ENCODE measurements at regions of chrX and their contacts with region 1.

Region 1: DNA sequence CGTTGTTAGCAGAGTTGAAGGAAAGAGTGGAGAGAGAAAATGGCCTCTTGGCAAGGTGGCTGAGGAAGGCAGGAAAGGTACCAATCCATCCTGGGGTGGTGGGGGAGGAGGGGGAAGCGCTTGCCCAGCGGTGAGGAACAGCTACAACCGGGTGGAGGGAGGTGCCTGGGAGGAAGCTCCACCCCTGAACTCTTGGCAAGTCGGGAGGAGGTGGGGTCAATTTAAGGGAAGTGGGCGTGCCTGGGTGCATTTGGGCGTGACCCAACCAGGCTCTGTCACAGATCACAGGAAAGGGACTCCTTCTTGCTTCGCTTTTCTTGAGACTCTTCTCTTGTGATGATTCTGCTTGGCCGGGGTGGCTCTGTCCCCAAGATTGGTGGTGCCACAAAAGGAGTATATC is 41.7 kb downstream of the BCORL1 start:
- DNase-seq: peak; percentile 69 to 88 (median 78)
- H3K4me3 ChIP-seq: no peak overlapping the region
- H3K4me3 Mint-ChIP-seq: peak overlapping the region in 6 of 7 donors; percentile 25 to 75 (median 58)
- H3K27ac ChIP-seq: peak overlapping the region; percentile 9
- H3K27ac Mint-ChIP-seq: peak overlapping the region; percentile 54 to 89 (median 78)
- H3K4me1 ChIP-seq: peaks cover 7% of the 10 kb centered on the region
- H3K4me1 Mint-ChIP-seq: peaks cover 13 to 14% (median 13%) of the 10 kb centered on the region in 3 donors
- H3K27me3 ChIP-seq: no peaks in the 10 kb centered on the region
- H3K27me3 Mint-ChIP-seq: peaks cover 0 to 7% of the 10 kb centered on the region in 2 donors

Region 2: DNA sequence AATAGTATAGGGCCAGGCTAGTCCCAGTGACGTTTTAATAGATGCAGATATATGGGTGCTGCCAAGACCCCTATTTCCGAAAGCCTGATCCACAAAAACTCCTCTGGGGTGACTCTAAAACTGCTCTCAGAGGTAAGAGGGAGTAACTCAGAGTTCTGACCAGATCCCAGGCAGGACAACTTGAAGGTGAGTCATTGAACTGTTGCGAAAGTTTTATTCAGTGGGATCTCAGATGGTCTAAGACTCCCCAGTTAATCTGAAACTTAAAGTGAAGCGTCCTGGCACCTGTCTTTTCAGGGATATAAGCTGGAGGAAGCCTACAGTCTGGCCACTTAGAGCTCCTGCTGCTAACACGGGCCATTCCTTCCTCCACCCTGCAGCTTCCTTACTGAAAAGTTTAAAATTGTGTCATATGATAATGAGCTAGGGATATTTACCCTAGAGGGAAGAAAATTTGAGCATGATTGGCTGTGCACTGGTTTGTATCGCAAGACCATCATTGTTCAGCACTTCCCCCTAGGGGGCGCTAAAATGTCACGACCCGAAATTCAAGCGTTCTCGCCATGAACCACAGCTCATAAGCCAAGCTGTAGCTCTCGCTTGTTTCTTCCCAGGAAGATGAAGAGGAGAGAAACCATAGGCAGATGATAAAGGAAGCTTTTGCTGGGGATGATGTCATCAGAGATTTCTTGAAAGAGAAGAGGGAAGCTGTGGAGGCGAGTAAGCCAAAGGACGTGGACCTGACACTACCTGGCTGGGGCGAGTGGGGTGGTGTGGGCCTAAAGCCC is 98.6 kb before region 1 on chrX:
- CTCF ChIA-PET with region 1: interaction called, 115 read pairs
- POLR2A ChIA-PET with region 1: interaction called, 4 read pairs
- DNase-seq: peak; percentile 51 to 77 (median 55)
- H3K4me3 ChIP-seq: no peak overlapping the region
- H3K4me3 Mint-ChIP-seq: no peak overlapping the region
- H3K27ac ChIP-seq: no peak overlapping the region
- H3K27ac Mint-ChIP-seq: peak overlapping the region in 2 of 8 donors; percentile 27 to 61
- H3K4me1 ChIP-seq: no peaks in the 10 kb centered on the region
- H3K4me1 Mint-ChIP-seq: peaks cover 3 to 6% (median 4%) of the 10 kb centered on the region in 3 donors
- H3K27me3 ChIP-seq: no peaks in the 10 kb centered on the region
- H3K27me3 Mint-ChIP-seq: peaks cover 0 to 3% of the 10 kb centered on the region in 2 donors

Region 3: DNA sequence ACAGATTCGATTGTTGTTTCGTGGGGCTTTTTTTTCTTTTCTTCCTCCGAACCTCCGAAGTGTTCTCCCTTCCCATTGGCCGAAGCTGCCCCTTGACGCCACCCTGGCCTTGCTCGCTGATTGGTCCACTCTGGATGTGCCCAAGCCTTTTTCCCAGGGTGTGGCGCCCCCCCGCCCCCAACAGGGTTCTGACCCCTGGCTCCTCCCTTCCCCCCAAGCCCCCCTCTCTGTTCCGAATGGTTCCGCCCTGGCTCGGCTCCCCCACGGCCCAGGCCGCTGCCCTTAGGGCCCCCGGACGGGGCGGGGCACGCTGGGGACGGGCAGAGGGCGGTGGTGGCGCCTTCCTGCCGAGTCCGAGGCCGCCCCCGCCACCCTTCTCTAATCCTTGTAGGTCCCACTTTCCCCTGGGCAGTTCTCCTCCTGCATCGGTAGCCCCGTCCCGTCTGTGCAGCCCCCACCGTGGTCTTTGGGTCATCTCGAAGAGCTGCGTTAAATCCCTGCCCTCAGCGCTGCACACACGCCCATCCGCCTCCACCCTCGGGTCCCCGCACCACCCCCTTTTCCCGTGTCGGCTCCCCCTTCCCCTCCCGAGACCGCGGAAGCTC is 92.6 kb before region 1 on chrX:
- CTCF ChIA-PET with region 1: interaction called, 115 read pairs
- POLR2A ChIA-PET with region 1: no interaction called
- DNase-seq: peak; percentile 29 to 79 (median 49)
- H3K4me3 ChIP-seq: peak overlapping the region; percentile 49
- H3K4me3 Mint-ChIP-seq: peak overlapping the region; percentile 77 to 92 (median 80)
- H3K27ac ChIP-seq: peak overlapping the region; percentile 51
- H3K27ac Mint-ChIP-seq: peak overlapping the region; percentile 28 to 99 (median 92)
- H3K4me1 ChIP-seq: no peaks in the 10 kb centered on the region
- H3K4me1 Mint-ChIP-seq: peaks cover 0 to 9% (median 0%) of the 10 kb centered on the region in 3 donors
- H3K27me3 ChIP-seq: no peaks in the 10 kb centered on the region
- H3K27me3 Mint-ChIP-seq: peaks cover 0 to 8% of the 10 kb centered on the region in 2 donors

Region 4: DNA sequence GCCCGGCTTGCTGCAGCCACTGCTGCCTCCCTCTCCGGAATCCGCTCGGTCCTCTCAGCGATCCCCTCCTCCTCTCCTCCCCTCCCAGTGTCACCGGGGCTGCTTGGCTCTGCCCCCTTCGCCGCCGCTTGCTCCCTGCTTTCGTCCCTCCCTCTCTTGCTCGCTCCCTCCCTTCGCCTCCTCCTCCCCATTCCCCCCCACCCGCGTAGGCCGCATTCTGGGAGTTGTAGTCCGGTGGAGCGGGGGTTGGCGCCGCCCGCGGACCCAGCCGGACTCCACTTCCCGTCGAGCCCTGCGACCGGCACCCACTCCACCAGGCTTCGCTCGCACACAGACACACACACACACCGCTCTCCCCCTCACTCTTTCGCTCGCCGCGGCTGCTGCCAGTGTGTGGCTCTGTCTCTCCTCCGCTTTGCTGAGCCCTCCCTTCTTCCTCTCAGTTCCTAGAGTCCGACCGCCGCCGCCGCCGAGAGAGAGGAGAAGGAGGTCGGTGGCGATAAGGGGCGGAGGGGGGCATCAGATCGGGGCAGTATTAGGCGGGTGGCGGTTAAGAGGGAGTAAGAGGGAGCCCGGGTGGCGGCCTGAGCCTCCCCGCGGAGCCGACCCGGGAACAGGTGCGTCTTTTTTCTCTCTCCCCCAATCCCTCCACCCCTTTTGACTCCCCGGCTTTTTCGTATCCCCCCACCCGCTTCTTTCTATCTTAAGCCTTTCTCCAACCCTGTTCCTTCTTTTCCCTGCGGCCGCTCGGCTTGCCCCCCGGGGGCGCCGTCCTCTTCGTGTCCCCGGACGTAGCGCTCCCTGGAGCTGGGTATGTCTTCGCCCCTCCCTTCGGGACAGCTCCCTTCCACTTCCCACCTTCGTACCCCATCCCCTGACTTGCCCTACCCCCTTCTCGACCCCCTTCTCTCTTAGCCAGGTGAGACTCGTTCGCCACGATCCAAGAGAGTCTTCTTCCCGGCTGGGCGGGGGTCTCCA is 41.6 kb before region 1 on chrX and contains the start of gene BCORL1:
- CTCF ChIA-PET with region 1: no interaction called
- POLR2A ChIA-PET with region 1: interaction called, 11 read pairs
- DNase-seq: peak; percentile 77 to 94 (median 83)
- H3K4me3 ChIP-seq: peak within 1 kb of the TSS; percentile 41
- H3K4me3 Mint-ChIP-seq: no peak within 1 kb of the TSS
- H3K27ac ChIP-seq: no peak within 1 kb of the TSS
- H3K27ac Mint-ChIP-seq: peak within 1 kb of the TSS in 5 of 8 donors; percentile 13 to 84 (median 79)
- H3K4me1 ChIP-seq: no peaks in the 10 kb centered on the region
- H3K4me1 Mint-ChIP-seq: peaks cover 17 to 42% (median 18%) of the 10 kb centered on the region in 3 donors
- H3K27me3 ChIP-seq: no peaks in the 10 kb centered on the region
- H3K27me3 Mint-ChIP-seq: no peaks in the 10 kb centered on the region
- total RNA-seq, gene BCORL1: 10.7 to 12.1 TPM

Region 5: GRCh38 chrX:130005089-130005807 is 18.9 kb before region 1 on chrX:
- CTCF ChIA-PET with region 1: no interaction called
- POLR2A ChIA-PET with region 1: no interaction called
- DNase-seq: no peak
- H3K4me3 ChIP-seq: no peak overlapping the region
- H3K4me3 Mint-ChIP-seq: peak overlapping the region in 1 of 7 donors; percentile 6
- H3K27ac ChIP-seq: no peak overlapping the region
- H3K27ac Mint-ChIP-seq: no peak overlapping the region
- H3K4me1 ChIP-seq: no peaks in the 10 kb centered on the region
- H3K4me1 Mint-ChIP-seq: peaks cover 0 to 10% (median 2%) of the 10 kb centered on the region in 3 donors
- H3K27me3 ChIP-seq: no peaks in the 10 kb centered on the region
- H3K27me3 Mint-ChIP-seq: peaks cover 0 to 2% of the 10 kb centered on the region in 2 donors

Region 6: GRCh38 chrX:130060122-130061069 is 36.3 kb after region 1 on chrX:
- CTCF ChIA-PET with region 1: interaction called, 14 read pairs
- POLR2A ChIA-PET with region 1: no interaction called
- DNase-seq: peak; percentile 71 to 81 (median 75)
- H3K4me3 ChIP-seq: peak overlapping the region; percentile 41
- H3K4me3 Mint-ChIP-seq: peak overlapping the region; percentile 54 to 91 (median 75)
- H3K27ac ChIP-seq: peak overlapping the region; percentile 16
- H3K27ac Mint-ChIP-seq: peak overlapping the region in 3 of 8 donors; percentile 78 to 93 (median 79)
- H3K4me1 ChIP-seq: peaks cover 4% of the 10 kb centered on the region
- H3K4me1 Mint-ChIP-seq: peaks cover 0 to 10% (median 0%) of the 10 kb centered on the region in 3 donors
- H3K27me3 ChIP-seq: no peaks in the 10 kb centered on the region
- H3K27me3 Mint-ChIP-seq: peaks cover 0 to 4% of the 10 kb centered on the region in 2 donors